K562 (cell line): ENCODE measurements at regions of chr2 and their contacts with region 1.

Region 1: GRCh38 chr2:25376750-25377621 is 35.3 kb upstream of the DNMT3A start:
- DNase-seq: peak; percentile 83 to 94 (median 90)
- ATAC-seq: peak; percentile 100
- H3K4me3 ChIP-seq: no peak overlapping the region
- H3K27ac ChIP-seq: no peak overlapping the region
- H3K4me1 ChIP-seq: peaks cover 6 to 10% of the 10 kb centered on the region in 2 experiments; a peak in 3 of 5 replicates
- H3K27me3 ChIP-seq: peaks cover 12 to 83% of the 10 kb centered on the region in 2 experiments; a peak in 3 of 5 replicates
- CTCF ChIP-seq: peak; percentile 85 to 95 (median 89)
- EP300 ChIP-seq: no peak
- POLR2A ChIP-seq: no peak
- RAD21 ChIP-seq: peak; percentile 49 to 70

Region 2: GRCh38 chr2:25165992-25166875 is 210.8 kb before region 1 on chr2:
- CTCF ChIA-PET with region 1: no interaction called
- POLR2A ChIA-PET with region 1: no interaction called
- in situ Hi-C with region 1: no loop called
- intact Hi-C with region 1: loop called (anchors 10 kb)
- DNase-seq: peak in 1 of 4 experiments; percentile 29
- ATAC-seq: peak; percentile 83
- H3K4me3 ChIP-seq: no peak overlapping the region
- H3K27ac ChIP-seq: no peak overlapping the region
- H3K4me1 ChIP-seq: peaks cover 0 to 11% of the 10 kb centered on the region in 2 experiments; a peak in 2 of 5 replicates
- H3K27me3 ChIP-seq: peaks cover 36 to 55% of the 10 kb centered on the region in 2 experiments
- CTCF ChIP-seq: peak; percentile 34 to 51 (median 46); a peak in 4 of 6 replicates
- EP300 ChIP-seq: no peak
- POLR2A ChIP-seq: no peak
- RAD21 ChIP-seq: peak; percentile 28 to 59; a peak in 3 of 4 replicates

Region 3: GRCh38 chr2:25386971-25387875 is 10.2 kb after region 1 on chr2:
- CTCF ChIA-PET with region 1: no interaction called
- POLR2A ChIA-PET with region 1: interaction called, 13 read pairs
- in situ Hi-C with region 1: no loop called
- intact Hi-C with region 1: no loop called
- DNase-seq: no peak
- ATAC-seq: no peak
- H3K4me3 ChIP-seq: no peak overlapping the region
- H3K27ac ChIP-seq: no peak overlapping the region
- H3K4me1 ChIP-seq: no peaks in the 10 kb centered on the region
- H3K27me3 ChIP-seq: peaks cover 36 to 56% of the 10 kb centered on the region in 2 experiments
- CTCF ChIP-seq: no peak
- EP300 ChIP-seq: no peak
- POLR2A ChIP-seq: no peak
- RAD21 ChIP-seq: no peak